ENCODE measurements at regions of chr11 and their contacts with region 1.

Region 1: DNA sequence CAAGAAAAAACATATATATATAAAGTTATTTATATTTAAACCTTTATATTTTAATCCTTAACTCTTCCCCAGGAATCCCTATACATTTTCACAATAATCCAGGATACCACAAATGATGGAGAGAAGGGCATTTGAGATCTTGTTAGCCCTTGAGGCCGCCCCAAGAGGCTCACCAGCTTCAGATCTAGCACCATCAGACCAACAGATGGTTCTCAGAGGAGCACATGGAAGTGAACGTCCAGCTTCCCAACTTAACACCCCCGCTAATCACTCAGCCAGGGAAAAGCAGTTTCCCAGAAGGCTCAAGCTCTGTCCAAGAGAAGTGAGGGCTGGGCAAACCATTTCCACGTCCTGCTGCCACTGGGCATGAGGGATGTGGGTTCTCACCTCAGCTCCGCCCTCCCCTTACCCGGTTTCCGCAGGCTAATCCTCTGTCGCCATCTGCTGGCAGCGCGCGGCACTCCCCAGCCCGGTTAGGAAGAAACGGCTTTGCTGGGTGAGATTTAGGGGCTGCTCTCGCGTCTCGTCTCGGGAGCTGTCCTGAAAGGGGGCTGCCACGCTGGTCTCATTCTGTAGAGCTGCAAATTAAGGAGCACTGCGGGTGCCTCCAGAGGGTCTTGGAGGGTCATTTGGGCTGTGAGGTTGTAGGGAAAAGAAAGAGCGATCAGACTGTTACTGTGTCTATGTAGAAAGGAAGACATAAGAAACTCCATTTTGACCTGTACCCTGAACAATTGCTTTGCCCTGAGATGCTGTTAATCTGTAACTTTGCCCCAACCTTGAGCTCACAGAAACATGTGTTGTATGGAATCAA is 6.8 kb upstream of the FAM111A start:
- DNase-seq: peak; percentile 85
- ATAC-seq: peak; percentile 98
- H3K4me3 Mint-ChIP-seq: peak overlapping the region; percentile 69
- H3K27ac Mint-ChIP-seq: peak overlapping the region; percentile 88
- H3K4me1 Mint-ChIP-seq: peaks cover 25% of the 10 kb centered on the region
- H3K27me3 Mint-ChIP-seq: no peaks in the 10 kb centered on the region
- CTCF ChIP-seq: peak; percentile 91

Region 2: DNA sequence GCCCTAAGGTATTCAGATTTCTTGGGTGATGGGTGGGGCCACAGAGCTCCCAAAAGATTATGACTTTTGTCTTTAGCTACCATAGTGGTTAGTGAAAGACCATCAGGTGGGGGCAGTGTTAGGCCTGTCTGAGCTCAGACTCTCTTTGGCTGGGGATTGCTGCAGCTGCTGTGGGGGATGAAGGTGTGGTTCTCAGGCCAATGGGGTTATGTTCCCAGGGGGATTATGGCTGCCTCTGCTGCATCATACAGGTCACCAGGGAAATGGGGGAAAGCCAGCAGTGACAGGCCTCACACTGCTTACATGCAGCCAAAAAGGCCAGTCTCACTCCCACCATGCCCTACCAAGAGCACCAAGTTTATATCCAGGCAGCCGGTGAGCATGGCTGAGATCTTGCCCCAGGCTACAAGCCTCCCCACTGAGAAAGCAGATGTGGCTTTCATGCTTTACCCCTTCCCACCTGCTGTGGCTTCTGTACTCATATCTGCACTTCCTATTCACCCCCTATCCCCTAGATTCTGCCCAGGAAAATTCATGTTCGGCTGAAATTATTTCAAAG is 488.6 kb before region 1 on chr11:
- CTCF ChIA-PET with region 1: interaction called, 24 read pairs
- POLR2A ChIA-PET with region 1: no interaction called
- intact Hi-C with region 1: no loop called
- DNase-seq: peak; percentile 33
- ATAC-seq: peak; percentile 93
- H3K4me3 Mint-ChIP-seq: peak overlapping the region; percentile 3
- H3K27ac Mint-ChIP-seq: peak overlapping the region; percentile 21
- H3K4me1 Mint-ChIP-seq: peaks cover 20% of the 10 kb centered on the region
- H3K27me3 Mint-ChIP-seq: peaks cover 2% of the 10 kb centered on the region
- CTCF ChIP-seq: no peak

Region 3: GRCh38 chr11:58675334-58676155 is 460.3 kb before region 1 on chr11:
- CTCF ChIA-PET with region 1: interaction called, 10 read pairs
- POLR2A ChIA-PET with region 1: no interaction called
- intact Hi-C with region 1: loop called (anchors 1 kb)
- DNase-seq: peak; percentile 67
- ATAC-seq: peak; percentile 80
- H3K4me3 Mint-ChIP-seq: no peak overlapping the region
- H3K27ac Mint-ChIP-seq: no peak overlapping the region
- H3K4me1 Mint-ChIP-seq: no peaks in the 10 kb centered on the region
- H3K27me3 Mint-ChIP-seq: peaks cover 3% of the 10 kb centered on the region
- CTCF ChIP-seq: peak; percentile 59

Region 4: GRCh38 chr11:58958500-58958899 is 177.4 kb before region 1 on chr11:
- CTCF ChIA-PET with region 1: interaction called, 42 read pairs
- POLR2A ChIA-PET with region 1: no interaction called
- intact Hi-C with region 1: loop called (anchors 1 kb)
- DNase-seq: peak; percentile 42
- ATAC-seq: peak; percentile 82
- H3K4me3 Mint-ChIP-seq: no peak overlapping the region
- H3K27ac Mint-ChIP-seq: no peak overlapping the region
- H3K4me1 Mint-ChIP-seq: peaks cover 2% of the 10 kb centered on the region
- H3K27me3 Mint-ChIP-seq: no peaks in the 10 kb centered on the region
- CTCF ChIP-seq: no peak

Region 5: GRCh38 chr11:59106363-59107336 is 29.2 kb before region 1 on chr11 and contains the start of gene FAM111B:
- CTCF ChIA-PET with region 1: interaction called, 29 read pairs
- POLR2A ChIA-PET with region 1: interaction called, 17 read pairs
- intact Hi-C with region 1: loop called (anchors 1 kb)
- DNase-seq: peak; percentile 43
- ATAC-seq: peak; percentile 33
- H3K4me3 Mint-ChIP-seq: peak within 1 kb of the TSS; percentile 94
- H3K27ac Mint-ChIP-seq: peak within 1 kb of the TSS; percentile 84
- H3K4me1 Mint-ChIP-seq: peaks cover 84% of the 10 kb centered on the region
- H3K27me3 Mint-ChIP-seq: no peaks in the 10 kb centered on the region
- CTCF ChIP-seq: no peak
- total RNA-seq, gene FAM111B: 48.0 and 49.1 TPM in 2 replicates

Region 6: DNA sequence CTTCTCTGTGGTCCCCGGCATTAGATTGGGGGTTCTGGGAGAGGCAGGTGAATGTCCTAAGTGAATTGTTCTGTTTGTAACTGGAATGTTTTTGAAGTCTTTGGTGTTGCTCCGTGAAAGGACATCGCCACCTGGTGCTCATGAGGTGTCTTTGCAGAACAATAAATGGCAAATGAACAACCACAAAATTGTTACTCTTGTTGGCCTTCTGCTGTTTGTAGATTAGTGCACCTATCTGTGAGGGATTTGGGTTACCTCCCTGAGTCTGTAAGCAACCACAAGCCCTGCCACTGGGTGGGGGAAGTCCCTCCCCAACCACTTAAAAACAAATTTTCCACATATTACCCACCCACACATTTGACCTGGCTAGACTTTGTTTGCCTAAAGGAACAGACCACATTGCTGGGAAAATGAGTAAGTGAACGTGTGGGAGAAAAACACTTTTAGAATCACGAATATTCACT is 72.2 kb after region 1 on chr11:
- CTCF ChIA-PET with region 1: no interaction called
- POLR2A ChIA-PET with region 1: no interaction called
- intact Hi-C with region 1: no loop called
- DNase-seq: no peak
- ATAC-seq: peak; percentile 45
- H3K4me3 Mint-ChIP-seq: peak overlapping the region; percentile 98
- H3K27ac Mint-ChIP-seq: peak overlapping the region; percentile 93
- H3K4me1 Mint-ChIP-seq: peaks cover 93% of the 10 kb centered on the region
- H3K27me3 Mint-ChIP-seq: no peaks in the 10 kb centered on the region
- CTCF ChIP-seq: no peak

Region 7: GRCh38 chr11:59267196-59267595 is 131.3 kb after region 1 on chr11:
- CTCF ChIA-PET with region 1: no interaction called
- POLR2A ChIA-PET with region 1: no interaction called
- intact Hi-C with region 1: no loop called
- DNase-seq: no peak
- ATAC-seq: peak; percentile 40
- H3K4me3 Mint-ChIP-seq: peak overlapping the region; percentile 38
- H3K27ac Mint-ChIP-seq: peak overlapping the region; percentile 76
- H3K4me1 Mint-ChIP-seq: peaks cover 89% of the 10 kb centered on the region
- H3K27me3 Mint-ChIP-seq: no peaks in the 10 kb centered on the region
- CTCF ChIP-seq: no peak

Region 8: GRCh38 chr11:60084631-60085273 is 948.9 kb after region 1 on chr11:
- CTCF ChIA-PET with region 1: no interaction called
- POLR2A ChIA-PET with region 1: no interaction called
- intact Hi-C with region 1: no loop called
- DNase-seq: no peak
- ATAC-seq: no peak
- H3K4me3 Mint-ChIP-seq: no peak overlapping the region
- H3K27ac Mint-ChIP-seq: no peak overlapping the region
- H3K4me1 Mint-ChIP-seq: no peaks in the 10 kb centered on the region
- H3K27me3 Mint-ChIP-seq: peaks cover 18% of the 10 kb centered on the region
- CTCF ChIP-seq: no peak

Measured in activated B cell treated with CpG ODN at 0.5 μM for 24 hours (primary cell).